Sciatic nerve (tissue), 2 donors: ENCODE measurements at regions of chr16 and their contacts with region 1.

Region 1: GRCh38 chr16:56608043-56608875 is at the start of gene MT2A:
- DNase-seq: peak; percentile 94
- ATAC-seq: peak; percentile 88
- total RNA-seq, gene MT2A: 163 TPM

Region 2: DNA sequence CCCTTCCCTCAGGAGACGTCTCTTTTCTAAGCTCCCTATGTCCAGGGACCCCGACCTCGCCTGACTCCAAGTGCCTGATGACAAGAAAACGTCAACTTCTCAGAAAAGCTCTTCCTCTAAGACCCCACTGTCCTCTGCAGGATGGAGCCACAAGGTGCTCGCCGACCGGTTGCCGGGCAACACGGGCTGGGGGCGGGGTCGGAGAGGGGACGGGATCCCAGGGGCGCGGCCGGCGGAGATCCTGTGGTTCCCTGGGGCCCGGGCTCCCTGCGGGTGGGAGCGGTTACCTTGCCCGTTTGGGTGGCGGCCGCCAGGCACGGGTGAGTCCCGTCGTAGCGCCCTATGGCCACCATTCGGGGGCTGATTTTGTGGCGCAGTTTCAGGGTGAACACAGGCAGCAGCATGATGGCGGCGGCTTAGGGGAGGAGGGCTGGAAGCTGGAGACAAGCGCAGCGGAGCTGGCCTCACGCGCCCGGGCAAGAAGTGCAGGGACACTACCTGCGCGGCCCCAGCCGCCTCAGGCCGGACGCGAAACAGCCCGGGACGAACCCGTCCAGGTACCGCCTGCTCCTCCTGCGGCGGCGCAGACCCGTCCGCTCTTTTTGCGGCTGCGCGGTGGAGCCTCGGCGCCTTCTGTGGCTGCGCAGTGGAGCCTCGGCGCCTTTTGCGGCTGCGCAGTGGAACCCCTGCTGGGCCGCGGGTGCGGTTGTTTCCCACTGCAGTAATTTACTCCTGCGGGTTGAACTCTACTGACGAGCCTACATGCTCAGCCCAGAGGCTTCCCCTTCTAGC is 88.6 kb before region 1 on chr16 and contains the start of gene BBS2:
- intact Hi-C with region 1: loop called (anchors 10 kb)
- DNase-seq: peak; percentile 94
- ATAC-seq: peak; percentile 98
- total RNA-seq, gene BBS2: 110 TPM

Region 3: GRCh38 chr16:58329147-58329546 is 1720.9 kb after region 1 on chr16:
- intact Hi-C with region 1: loop called (anchors 5 kb)
- DNase-seq: no peak
- ATAC-seq: peak; percentile 55